Lower lobe of right lung (tissue), 2 donors: ENCODE measurements at regions of chr2 and their contacts with region 1.

Region 1: DNA sequence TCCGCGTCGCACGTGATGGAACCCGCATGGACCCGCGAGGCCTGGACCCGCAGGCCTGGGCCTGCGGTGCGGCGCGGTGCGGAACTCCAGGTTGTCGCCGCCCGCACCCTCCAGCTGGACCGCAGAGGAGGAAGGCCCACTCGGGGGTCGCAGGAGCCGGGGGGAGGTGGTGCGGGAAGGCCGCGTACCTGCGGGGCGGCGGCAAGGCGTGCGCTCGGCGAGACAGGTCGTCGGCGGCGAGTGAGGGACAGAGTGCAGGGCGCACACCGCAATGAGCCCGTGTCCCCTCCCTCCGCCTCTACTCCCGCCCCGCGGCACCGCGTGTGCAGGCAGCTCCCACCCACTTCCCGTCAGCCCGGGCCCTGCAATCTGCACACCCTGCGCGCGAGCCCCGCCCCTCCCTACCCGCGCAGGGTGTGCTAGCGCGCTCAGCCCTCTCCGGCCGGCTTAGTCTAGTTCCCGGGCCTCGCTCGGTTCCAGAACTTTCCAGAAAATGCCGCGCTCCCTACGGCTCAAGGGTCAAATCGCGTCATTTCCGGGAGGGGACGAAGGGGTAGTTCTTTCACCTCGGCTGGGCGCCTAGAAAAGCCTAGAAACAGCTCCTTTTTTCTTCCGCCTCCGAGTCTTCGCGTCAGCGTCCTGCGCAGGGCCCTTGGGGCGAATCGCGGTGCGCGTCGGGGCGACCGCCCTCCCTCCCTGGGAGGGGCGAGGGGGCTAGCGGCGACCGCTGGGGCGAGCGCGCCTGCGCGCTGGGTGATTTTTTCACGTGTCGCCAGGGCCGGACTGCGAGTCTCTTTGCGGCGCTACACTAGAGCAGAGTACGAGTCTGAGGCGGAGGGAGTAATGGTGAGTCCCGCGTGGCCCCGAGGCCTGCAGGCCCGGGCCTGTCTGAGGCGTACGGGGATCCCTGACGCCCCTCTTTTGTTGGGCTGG is at the starts of genes HSPD1 and HSPE1:
- DNase-seq: peak; percentile 98
- ATAC-seq: peak; percentile 96 to 98
- H3K4me3 ChIP-seq: peak within 1 kb of the TSS; percentile 94
- H3K27ac ChIP-seq: peak within 1 kb of the TSS; percentile 92
- H3K4me1 ChIP-seq: peaks cover 53% of the 10 kb centered on the region
- H3K27me3 ChIP-seq: no peaks in the 10 kb centered on the region
- CTCF ChIP-seq: no peak
- total RNA-seq, gene HSPD1: 150 TPM
- total RNA-seq, gene HSPE1: 65.3 TPM

Region 2: GRCh38 chr2:197052356-197052755 is 447.5 kb before region 1 on chr2:
- intact Hi-C with region 1: no loop called
- DNase-seq: no peak
- ATAC-seq: no peak
- H3K4me3 ChIP-seq: no peak overlapping the region
- H3K27ac ChIP-seq: no peak overlapping the region
- H3K4me1 ChIP-seq: no peaks in the 10 kb centered on the region
- H3K27me3 ChIP-seq: no peaks in the 10 kb centered on the region
- CTCF ChIP-seq: no peak

Region 3: GRCh38 chr2:197777823-197778407 is 278.1 kb after region 1 on chr2:
- intact Hi-C with region 1: loop called (anchors 10 kb)
- DNase-seq: no peak
- ATAC-seq: no peak
- H3K4me3 ChIP-seq: no peak overlapping the region
- H3K27ac ChIP-seq: no peak overlapping the region
- H3K4me1 ChIP-seq: no peaks in the 10 kb centered on the region
- H3K27me3 ChIP-seq: no peaks in the 10 kb centered on the region
- CTCF ChIP-seq: peak; percentile 72